IMR-90 (cell line): ENCODE measurements at regions of chr10 and their contacts with region 1.

Region 1: DNA sequence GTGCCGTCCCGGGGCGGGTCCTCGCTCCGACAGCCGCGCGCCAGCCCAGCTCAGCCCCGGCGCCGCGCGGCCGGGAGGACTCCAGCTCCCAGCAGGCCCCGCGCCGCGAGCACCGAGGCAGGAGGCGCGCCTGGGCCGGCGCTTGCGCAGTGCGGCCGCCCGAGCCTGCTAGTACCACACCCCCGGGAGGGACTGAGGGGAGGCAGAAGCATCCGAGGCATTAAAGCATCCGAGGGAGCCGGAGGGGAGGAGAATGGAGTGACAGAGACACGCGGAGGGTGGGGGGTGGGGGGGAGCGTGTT is at the start of gene GRK5:
- DNase-seq: peak; percentile 98
- ATAC-seq: peak; percentile 90
- H3K4me3 ChIP-seq: peak within 1 kb of the TSS; percentile 61
- H3K27ac ChIP-seq: peak within 1 kb of the TSS; percentile 96
- H3K4me1 ChIP-seq: peaks cover 18% of the 10 kb centered on the region
- H3K27me3 ChIP-seq: no peaks in the 10 kb centered on the region
- CTCF ChIP-seq: no peak
- POLR2A ChIP-seq: peak; percentile 69; the same call in 1 of the 2 replicates
- RAD21 ChIP-seq: no peak
- total RNA-seq, gene GRK5: 11.9 and 12.9 TPM in 2 replicates

Region 2: GRCh38 chr10:118818621-118819221 is 388.6 kb before region 1 on chr10:
- CTCF ChIA-PET with region 1: no interaction called
- POLR2A ChIA-PET with region 1: no interaction called
- dilution Hi-C with region 1: no loop called
- in situ Hi-C with region 1: no loop called
- intact Hi-C with region 1: no loop called
- DNase-seq: no peak
- ATAC-seq: no peak
- H3K4me3 ChIP-seq: no peak overlapping the region
- H3K27ac ChIP-seq: no peak overlapping the region
- H3K4me1 ChIP-seq: no peaks in the 10 kb centered on the region
- H3K27me3 ChIP-seq: peaks cover 5% of the 10 kb centered on the region; the same call in 1 of the 2 replicates
- CTCF ChIP-seq: no peak
- POLR2A ChIP-seq: no peak
- RAD21 ChIP-seq: no peak

Region 3: DNA sequence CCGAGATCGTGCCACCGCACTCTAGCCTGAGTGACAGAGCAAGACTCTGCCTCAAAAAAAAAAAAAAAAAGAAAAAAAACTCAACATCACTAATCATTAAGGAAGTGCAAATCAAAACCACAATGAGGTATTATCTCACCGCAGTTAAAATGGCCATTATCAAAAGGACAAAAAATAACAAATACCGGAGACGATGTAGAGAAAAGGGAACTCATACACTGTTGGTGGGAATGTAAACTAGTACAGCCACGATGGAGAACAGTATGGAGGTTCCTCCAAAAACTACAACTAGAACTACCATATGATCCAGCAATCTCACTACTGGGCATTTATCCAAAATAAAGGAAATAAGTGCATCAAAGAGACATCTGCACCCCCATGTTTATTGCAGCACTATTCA is 24.3 kb after region 1 on chr10:
- CTCF ChIA-PET with region 1: no interaction called
- POLR2A ChIA-PET with region 1: no interaction called
- dilution Hi-C with region 1: no loop called
- in situ Hi-C with region 1: no loop called
- intact Hi-C with region 1: no loop called
- DNase-seq: no peak
- ATAC-seq: no peak
- H3K4me3 ChIP-seq: no peak overlapping the region
- H3K27ac ChIP-seq: no peak overlapping the region
- H3K4me1 ChIP-seq: peaks cover 22% of the 10 kb centered on the region
- H3K27me3 ChIP-seq: no peaks in the 10 kb centered on the region
- CTCF ChIP-seq: no peak
- POLR2A ChIP-seq: no peak
- RAD21 ChIP-seq: no peak

Region 4: GRCh38 chr10:119246862-119247549 is 39.7 kb after region 1 on chr10:
- CTCF ChIA-PET with region 1: interaction called, 4 read pairs
- POLR2A ChIA-PET with region 1: interaction called, 3 read pairs
- dilution Hi-C with region 1: no loop called
- in situ Hi-C with region 1: no loop called
- intact Hi-C with region 1: loop called (anchors 1 kb)
- DNase-seq: peak; percentile 97
- ATAC-seq: peak; percentile 74
- H3K4me3 ChIP-seq: no peak overlapping the region
- H3K27ac ChIP-seq: peak overlapping the region; percentile 95
- H3K4me1 ChIP-seq: peaks cover 26% of the 10 kb centered on the region
- H3K27me3 ChIP-seq: no peaks in the 10 kb centered on the region
- CTCF ChIP-seq: 0 out of 2 replicates have a peak, but pooled peaks have one; percentile 16
- POLR2A ChIP-seq: peak; percentile 48; the same call in 1 of the 2 replicates
- RAD21 ChIP-seq: peak; percentile 12

Region 5: GRCh38 chr10:119370111-119370741 is 162.9 kb after region 1 on chr10:
- CTCF ChIA-PET with region 1: interaction called, 5 read pairs
- POLR2A ChIA-PET with region 1: interaction called, 15 read pairs
- dilution Hi-C with region 1: no loop called
- in situ Hi-C with region 1: no loop called
- intact Hi-C with region 1: loop called (anchors 1 kb)
- DNase-seq: peak; percentile 90
- ATAC-seq: peak; percentile 18
- H3K4me3 ChIP-seq: no peak overlapping the region
- H3K27ac ChIP-seq: peak overlapping the region; percentile 90
- H3K4me1 ChIP-seq: peaks cover 56% of the 10 kb centered on the region
- H3K27me3 ChIP-seq: no peaks in the 10 kb centered on the region
- CTCF ChIP-seq: no peak
- POLR2A ChIP-seq: no peak; the same call in 1 of the 2 replicates
- RAD21 ChIP-seq: no peak; the same call in 1 of the 2 replicates

Region 6: DNA sequence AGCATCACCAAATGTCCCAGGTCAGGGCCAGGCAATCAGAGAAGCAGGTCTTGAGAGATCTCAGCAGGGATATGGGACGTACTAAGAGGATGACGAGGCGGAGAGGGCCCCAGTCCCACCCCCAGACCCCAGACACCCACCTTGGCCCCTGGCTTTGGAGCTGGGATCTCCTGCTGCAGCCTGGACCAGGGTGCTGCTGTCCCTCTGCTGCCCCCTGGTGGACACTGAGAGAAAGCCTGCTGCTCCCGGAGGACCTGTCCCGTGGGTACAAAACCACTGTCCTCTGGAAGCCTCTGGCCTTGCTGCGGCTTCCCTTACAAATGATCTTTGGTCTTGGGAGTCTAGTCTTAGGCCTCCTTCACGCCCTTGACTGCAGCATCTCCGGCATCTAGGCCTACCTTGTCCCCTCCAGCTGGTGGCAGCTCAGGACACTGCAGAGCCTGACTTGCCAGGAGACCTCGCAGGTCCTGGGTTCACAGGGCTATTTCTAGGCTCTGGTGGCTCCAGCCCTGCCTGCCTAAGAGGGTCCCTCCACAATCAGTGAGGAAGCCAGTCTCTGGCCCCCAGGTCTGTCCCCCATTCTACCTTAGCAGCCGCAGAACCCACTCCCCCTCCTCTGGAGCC is 238.1 kb after region 1 on chr10:
- CTCF ChIA-PET with region 1: interaction called, 6 read pairs
- POLR2A ChIA-PET with region 1: no interaction called
- dilution Hi-C with region 1: no loop called
- in situ Hi-C with region 1: no loop called
- intact Hi-C with region 1: loop called (anchors 1 kb)
- DNase-seq: peak; percentile 74
- ATAC-seq: peak; percentile 74
- H3K4me3 ChIP-seq: no peak overlapping the region
- H3K27ac ChIP-seq: no peak overlapping the region
- H3K4me1 ChIP-seq: peaks cover 9% of the 10 kb centered on the region; the same call in 1 of the 2 replicates
- H3K27me3 ChIP-seq: no peaks in the 10 kb centered on the region
- CTCF ChIP-seq: peak; percentile 86
- POLR2A ChIP-seq: no peak
- RAD21 ChIP-seq: peak; percentile 86

Region 7: DNA sequence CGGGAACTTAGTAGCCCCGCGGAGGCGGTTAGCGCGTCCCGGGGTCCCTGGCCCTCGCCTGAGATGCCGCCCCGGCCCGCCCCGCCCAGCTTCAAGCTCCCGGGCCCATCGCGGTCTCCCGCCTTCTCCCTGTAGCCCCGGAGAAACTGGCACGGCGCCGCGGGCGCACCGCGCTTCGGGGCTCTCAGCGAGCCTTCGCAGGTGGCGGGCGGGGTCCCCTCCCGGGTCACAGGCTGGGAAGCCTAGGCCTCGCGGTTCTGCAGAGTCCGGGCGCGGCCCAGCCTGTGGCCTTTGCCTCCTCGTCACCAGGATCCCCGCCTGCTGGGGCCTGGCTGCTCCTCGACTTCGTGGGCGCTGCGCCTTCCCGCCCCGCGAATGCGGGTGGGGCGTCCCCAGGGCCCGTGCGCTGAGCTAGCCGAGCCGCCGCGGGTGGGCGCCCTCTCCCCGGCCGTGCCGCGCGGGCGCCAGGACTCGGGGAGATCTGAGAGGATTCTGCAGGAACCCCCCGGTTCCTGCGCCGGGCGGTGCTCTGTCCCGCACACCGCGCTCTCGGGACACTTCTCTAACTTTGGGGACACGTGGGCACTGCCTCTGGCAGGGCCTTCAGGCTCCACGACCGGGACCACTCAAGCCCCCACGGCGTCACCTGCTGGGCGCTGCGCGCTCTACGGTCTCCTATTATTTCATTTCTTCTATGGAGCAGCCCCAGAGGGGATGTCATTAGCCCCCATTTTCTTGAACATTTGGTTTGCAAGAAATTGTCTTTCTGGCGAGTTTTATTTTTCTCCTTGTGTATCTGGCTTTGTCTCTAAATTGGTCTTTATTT is 335.9 kb after region 1 on chr10:
- CTCF ChIA-PET with region 1: interaction called, 7 read pairs
- POLR2A ChIA-PET with region 1: interaction called, 6 read pairs
- dilution Hi-C with region 1: no loop called
- in situ Hi-C with region 1: no loop called
- intact Hi-C with region 1: loop called (anchors 2 kb)
- DNase-seq: peak; percentile 49
- ATAC-seq: peak; percentile 58
- H3K4me3 ChIP-seq: peak overlapping the region; percentile 81
- H3K27ac ChIP-seq: peak overlapping the region; percentile 43
- H3K4me1 ChIP-seq: peaks cover 20% of the 10 kb centered on the region
- H3K27me3 ChIP-seq: no peaks in the 10 kb centered on the region; the same call in 1 of the 2 replicates
- CTCF ChIP-seq: peak; percentile 56
- POLR2A ChIP-seq: no peak; the same call in 1 of the 2 replicates
- RAD21 ChIP-seq: peak; percentile 54

Region 8: GRCh38 chr10:119680050-119680449 is 472.7 kb after region 1 on chr10:
- CTCF ChIA-PET with region 1: no interaction called
- POLR2A ChIA-PET with region 1: no interaction called
- dilution Hi-C with region 1: no loop called
- in situ Hi-C with region 1: no loop called
- intact Hi-C with region 1: no loop called
- DNase-seq: peak; percentile 82
- ATAC-seq: peak; percentile 33
- H3K4me3 ChIP-seq: no peak overlapping the region
- H3K27ac ChIP-seq: no peak overlapping the region
- H3K4me1 ChIP-seq: peaks cover 17% of the 10 kb centered on the region
- H3K27me3 ChIP-seq: no peaks in the 10 kb centered on the region
- CTCF ChIP-seq: no peak
- POLR2A ChIP-seq: 0 out of 2 replicates have a peak, but pooled peaks have one; percentile 43
- RAD21 ChIP-seq: no peak